ENCODE measurements at regions of chr14 and their contacts with region 1.

Region 1: DNA sequence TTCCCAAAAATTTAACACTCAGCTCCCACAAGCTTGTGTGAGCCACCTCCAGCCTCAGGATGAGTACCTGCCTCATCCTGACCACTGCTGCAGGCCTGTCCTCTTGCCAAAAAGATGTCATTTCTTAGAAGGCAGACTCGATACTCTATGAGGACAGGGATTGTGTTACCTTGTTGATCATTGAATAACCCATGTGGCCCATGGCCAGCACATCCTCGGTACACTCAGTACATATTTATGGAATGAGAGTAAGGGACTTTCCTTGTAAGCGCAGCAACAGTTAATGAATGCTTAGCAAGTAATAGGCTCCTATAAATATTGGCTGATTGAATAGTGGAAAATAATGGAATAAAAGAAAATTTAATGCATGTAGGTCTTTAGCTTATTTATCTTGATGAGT is 15.3 kb upstream of the DGLUCY start:
- DNase-seq: no peak
- H3K4me3 Mint-ChIP-seq: no peak overlapping the region
- H3K27ac Mint-ChIP-seq: no peak overlapping the region
- H3K4me1 Mint-ChIP-seq: peaks cover 9% of the 10 kb centered on the region
- H3K27me3 Mint-ChIP-seq: no peaks in the 10 kb centered on the region

Region 2: DNA sequence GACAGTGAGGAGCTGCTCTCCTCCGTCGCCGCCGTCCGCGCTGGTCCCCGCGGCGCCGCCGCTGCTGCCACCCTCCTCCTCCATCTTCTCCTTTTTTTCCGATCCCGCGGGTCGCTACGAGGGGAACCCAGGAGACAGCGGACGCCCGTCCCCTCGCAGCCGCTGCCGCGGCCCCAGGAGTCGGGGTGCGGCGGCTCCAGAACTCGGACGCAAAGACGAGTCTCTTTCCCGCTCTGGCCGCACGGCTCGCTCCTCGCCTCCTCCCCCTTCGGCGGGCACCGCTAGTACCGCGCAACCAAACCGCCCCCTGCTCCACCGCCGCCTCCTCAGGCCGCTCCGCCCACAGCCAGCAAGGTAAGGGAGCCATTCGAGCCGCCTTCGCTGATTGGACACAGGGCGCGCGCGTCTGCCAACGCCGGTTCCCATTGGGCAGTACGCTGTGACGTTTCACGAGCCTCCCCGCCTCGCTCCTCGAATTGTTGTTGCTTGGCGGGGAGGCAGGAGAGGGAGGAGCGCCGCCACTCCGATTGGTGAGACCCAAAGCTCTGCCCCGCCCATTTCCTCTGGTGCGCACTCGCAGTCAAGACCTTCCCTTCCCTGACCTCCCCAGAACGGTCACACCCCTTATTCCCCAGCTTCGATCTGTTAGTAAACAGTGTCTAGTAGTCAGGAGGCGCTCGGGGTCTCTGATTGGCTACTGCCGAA is 38.1 kb before region 1 on chr14 and contains the start of gene RPS6KA5:
- CTCF ChIA-PET with region 1: interaction called, 13 read pairs
- POLR2A ChIA-PET with region 1: no interaction called
- DNase-seq: peak; percentile 100
- H3K4me3 Mint-ChIP-seq: peak within 1 kb of the TSS; percentile 89
- H3K27ac Mint-ChIP-seq: peak within 1 kb of the TSS; percentile 87
- H3K4me1 Mint-ChIP-seq: peaks cover 62% of the 10 kb centered on the region
- H3K27me3 Mint-ChIP-seq: no peaks in the 10 kb centered on the region
- total RNA-seq, gene RPS6KA5: 42.1 to 44.8 TPM

Region 3: DNA sequence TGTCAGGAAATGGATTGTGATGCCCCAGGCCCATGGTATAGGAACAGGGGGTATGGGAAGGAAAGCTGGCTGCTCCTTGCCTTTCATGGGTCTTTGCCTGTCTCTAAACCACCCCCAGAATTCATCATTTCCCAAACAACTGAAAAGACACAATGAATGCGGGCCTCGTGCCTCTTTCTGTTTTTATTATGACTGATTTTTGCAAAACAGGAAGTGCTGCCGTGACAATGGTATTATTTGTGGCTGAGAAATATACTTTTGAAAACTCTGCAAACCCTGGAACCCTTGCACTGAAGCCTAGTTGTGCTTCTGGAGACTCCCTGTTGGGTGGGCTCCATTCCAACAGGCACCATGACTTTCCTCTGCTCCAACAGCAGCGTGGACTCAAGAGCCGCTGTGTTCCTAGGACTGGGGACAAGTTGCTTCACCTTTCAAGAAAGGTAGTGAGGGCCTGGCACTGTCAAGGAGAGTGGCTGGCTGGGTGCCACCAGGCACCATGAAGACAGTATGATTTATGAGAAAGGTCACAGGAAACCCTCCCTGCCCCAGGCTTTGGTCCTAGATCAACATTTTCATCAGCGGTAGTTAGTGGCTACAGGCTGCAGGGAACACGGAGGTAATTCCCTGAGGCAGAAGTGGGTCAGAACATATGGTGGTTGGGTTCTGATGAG is 10.5 kb after region 1 on chr14:
- CTCF ChIA-PET with region 1: interaction called, 26 read pairs
- POLR2A ChIA-PET with region 1: no interaction called
- DNase-seq: peak; percentile 52
- H3K4me3 Mint-ChIP-seq: no peak overlapping the region
- H3K27ac Mint-ChIP-seq: peak overlapping the region; percentile 91
- H3K4me1 Mint-ChIP-seq: peaks cover 57% of the 10 kb centered on the region
- H3K27me3 Mint-ChIP-seq: no peaks in the 10 kb centered on the region

Region 4: GRCh38 chr14:91127401-91127854 is 28.8 kb after region 1 on chr14:
- CTCF ChIA-PET with region 1: no interaction called
- POLR2A ChIA-PET with region 1: no interaction called
- DNase-seq: no peak
- H3K4me3 Mint-ChIP-seq: no peak overlapping the region
- H3K27ac Mint-ChIP-seq: no peak overlapping the region
- H3K4me1 Mint-ChIP-seq: peaks cover 28% of the 10 kb centered on the region
- H3K27me3 Mint-ChIP-seq: no peaks in the 10 kb centered on the region

Region 5: GRCh38 chr14:91223028-91223783 is 124.6 kb after region 1 on chr14:
- CTCF ChIA-PET with region 1: no interaction called
- POLR2A ChIA-PET with region 1: no interaction called
- DNase-seq: no peak
- H3K4me3 Mint-ChIP-seq: no peak overlapping the region
- H3K27ac Mint-ChIP-seq: peak overlapping the region; percentile 74
- H3K4me1 Mint-ChIP-seq: peaks cover 70% of the 10 kb centered on the region
- H3K27me3 Mint-ChIP-seq: no peaks in the 10 kb centered on the region

Measured in activated CD4-positive, alpha-beta T cell treated with anti-CD3 and anti-CD28 coated beads, Interleukin-2, amount 10 ng/mL, durations not matched to agents 7 days and 5 days (primary cell).